PC-9 (cell line): ENCODE measurements at regions of chr7 and their contacts with region 1.

Region 1: GRCh38 chr7:70361821-70362220 is 763.5 kb downstream of the AUTS2 start:
- DNase-seq: no peak
- H3K4me3 ChIP-seq: no peak overlapping the region
- H3K27ac ChIP-seq: no peak overlapping the region
- H3K4me1 ChIP-seq: no peaks in the 10 kb centered on the region
- H3K27me3 ChIP-seq: peaks cover 18% of the 10 kb centered on the region
- CTCF ChIP-seq: no peak

Region 2: DNA sequence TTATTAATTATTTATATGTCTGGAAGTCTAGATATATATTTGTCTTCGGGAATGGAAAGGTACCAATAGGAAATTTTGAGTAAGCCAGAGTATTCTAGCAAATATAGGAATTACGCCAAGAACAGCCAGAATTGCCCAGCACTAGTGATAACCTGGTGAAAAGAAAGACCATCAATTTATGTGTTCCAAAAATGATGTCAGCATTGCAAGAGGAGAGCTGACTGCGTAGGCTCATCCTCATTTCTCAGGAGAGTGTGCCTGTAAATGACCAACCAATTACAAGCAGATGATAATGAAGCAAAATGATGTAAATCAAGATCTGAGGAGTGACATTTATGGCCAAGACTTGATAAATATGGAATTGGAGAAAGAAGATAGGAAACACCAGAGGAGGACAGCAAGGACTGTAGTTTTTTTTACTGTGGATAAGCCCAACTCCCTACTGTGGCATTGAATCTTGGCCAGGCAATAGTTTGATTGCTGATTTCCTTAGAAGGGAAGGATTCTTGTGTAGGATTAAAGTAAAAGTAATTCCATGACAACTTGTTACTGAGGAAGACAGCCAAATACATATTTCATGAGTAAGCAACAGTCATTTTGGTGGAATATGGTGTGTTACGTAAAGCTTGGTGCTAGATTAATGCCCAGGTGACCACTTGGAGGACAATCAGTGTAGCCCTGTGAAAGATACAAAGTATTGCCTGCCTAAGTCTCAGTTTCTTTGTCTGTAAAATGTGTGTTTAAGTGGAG is 172.7 kb before region 1 on chr7:
- CTCF ChIA-PET with region 1: no interaction called
- POLR2A ChIA-PET with region 1: interaction called, 11 read pairs
- intact Hi-C with region 1: no loop called
- DNase-seq: no peak
- H3K4me3 ChIP-seq: no peak overlapping the region
- H3K27ac ChIP-seq: no peak overlapping the region
- H3K4me1 ChIP-seq: no peaks in the 10 kb centered on the region
- H3K27me3 ChIP-seq: no peaks in the 10 kb centered on the region
- CTCF ChIP-seq: no peak

Region 3: GRCh38 chr7:70241536-70242175 is 120.2 kb before region 1 on chr7:
- CTCF ChIA-PET with region 1: no interaction called
- POLR2A ChIA-PET with region 1: no interaction called
- intact Hi-C with region 1: no loop called
- DNase-seq: no peak
- H3K4me3 ChIP-seq: no peak overlapping the region
- H3K27ac ChIP-seq: no peak overlapping the region
- H3K4me1 ChIP-seq: no peaks in the 10 kb centered on the region
- H3K27me3 ChIP-seq: no peaks in the 10 kb centered on the region
- CTCF ChIP-seq: no peak

Region 4: DNA sequence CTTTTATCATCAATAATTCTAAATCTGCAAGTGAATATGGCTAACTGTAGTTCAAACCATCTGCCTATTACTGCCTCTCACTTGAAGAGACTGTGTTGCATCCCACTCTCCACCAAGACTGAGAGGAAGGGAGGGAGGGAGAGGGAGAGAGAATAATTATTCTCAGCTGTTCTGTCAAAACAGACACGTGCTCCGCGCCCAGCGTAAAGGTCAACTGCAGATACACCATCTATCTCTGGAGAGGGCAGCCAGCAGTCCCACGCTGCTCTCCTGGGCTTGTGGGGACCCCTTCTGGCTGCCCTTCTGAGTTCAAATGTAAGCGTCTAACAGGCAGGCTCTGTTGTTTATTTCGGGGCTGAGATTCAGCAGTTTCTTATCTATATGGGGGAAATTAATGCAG is 144.6 kb after region 1 on chr7:
- CTCF ChIA-PET with region 1: no interaction called
- POLR2A ChIA-PET with region 1: no interaction called
- intact Hi-C with region 1: no loop called
- DNase-seq: no peak
- H3K4me3 ChIP-seq: no peak overlapping the region
- H3K27ac ChIP-seq: no peak overlapping the region
- H3K4me1 ChIP-seq: no peaks in the 10 kb centered on the region
- H3K27me3 ChIP-seq: peaks cover 16% of the 10 kb centered on the region; the same call in 1 of the 2 replicates
- CTCF ChIP-seq: no peak